ENCODE measurements at regions of chr19 and their contacts with region 1.

Region 1: GRCh38 chr19:9205501-9206113 is 13.8 kb downstream of the OR7D4 start:
- DNase-seq: peak; percentile 76
- H3K4me3 Mint-ChIP-seq: peak overlapping the region; percentile 23
- H3K27ac Mint-ChIP-seq: no peak overlapping the region
- H3K4me1 Mint-ChIP-seq: peaks cover 2% of the 10 kb centered on the region
- H3K27me3 Mint-ChIP-seq: peaks cover 4% of the 10 kb centered on the region

Region 2: DNA sequence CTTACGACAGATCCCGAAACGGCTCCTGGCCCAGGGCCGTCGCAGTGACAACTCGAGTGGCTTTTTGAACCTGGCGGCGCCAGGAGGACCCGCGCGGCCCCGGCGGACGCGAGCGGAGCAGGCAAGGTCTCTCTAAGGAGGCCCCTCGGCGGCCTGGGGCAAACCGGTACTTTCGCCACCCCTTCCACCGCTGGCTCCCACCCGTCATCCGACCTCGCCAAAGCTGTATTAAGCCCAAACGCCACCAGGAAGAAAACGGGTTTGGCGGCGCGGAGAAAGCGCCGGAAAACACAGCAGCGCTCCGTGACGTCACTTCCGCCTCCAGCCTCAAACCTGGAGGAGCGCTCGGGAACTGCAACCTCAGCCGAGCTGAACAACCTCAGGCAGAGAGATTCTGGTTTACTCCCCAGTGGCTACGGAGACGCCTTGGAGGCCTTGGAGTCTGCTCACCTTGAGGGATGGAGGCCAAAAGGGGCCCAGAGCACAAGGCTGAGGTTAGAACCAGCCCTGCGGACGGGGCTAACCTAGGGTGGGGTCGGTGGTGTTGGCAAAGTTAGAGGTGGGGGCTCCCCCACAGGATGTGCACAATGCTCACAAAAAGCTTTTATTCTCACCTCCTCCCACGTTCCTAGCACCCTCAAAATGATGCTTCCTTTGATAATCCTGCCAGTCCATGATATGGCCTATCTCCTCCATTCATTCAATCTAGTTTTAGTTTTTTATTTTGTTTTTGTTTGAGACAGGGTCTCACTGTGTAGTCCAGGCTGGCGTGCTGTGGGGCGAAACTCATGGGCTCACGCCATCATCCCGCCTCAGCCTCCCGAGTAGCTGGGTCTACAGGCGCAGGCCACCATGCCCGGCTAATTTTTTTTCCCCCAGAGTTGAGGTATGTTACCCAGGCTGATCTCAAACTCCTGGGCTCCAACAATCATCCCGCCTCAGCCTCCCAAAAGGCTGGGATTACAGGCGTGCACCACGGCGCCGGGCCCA is 230.0 kb after region 1 on chr19 and contains the start of gene ZNF266:
- CTCF ChIA-PET with region 1: interaction called, 14 read pairs
- POLR2A ChIA-PET with region 1: no interaction called
- intact Hi-C with region 1: loop called (anchors 1 kb)
- DNase-seq: peak; percentile 96
- H3K4me3 Mint-ChIP-seq: peak within 1 kb of the TSS; percentile 94
- H3K27ac Mint-ChIP-seq: peak within 1 kb of the TSS; percentile 98
- H3K4me1 Mint-ChIP-seq: peaks cover 33% of the 10 kb centered on the region
- H3K27me3 Mint-ChIP-seq: no peaks in the 10 kb centered on the region
- total RNA-seq, gene ZNF266: 20.0 to 23.4 TPM

Measured in activated CD4-positive, alpha-beta memory T cell treated with anti-CD3 and anti-CD28 coated beads for 36 hours (primary cell).